ENCODE measurements at regions of chr1 and their contacts with region 1.

Region 1: DNA sequence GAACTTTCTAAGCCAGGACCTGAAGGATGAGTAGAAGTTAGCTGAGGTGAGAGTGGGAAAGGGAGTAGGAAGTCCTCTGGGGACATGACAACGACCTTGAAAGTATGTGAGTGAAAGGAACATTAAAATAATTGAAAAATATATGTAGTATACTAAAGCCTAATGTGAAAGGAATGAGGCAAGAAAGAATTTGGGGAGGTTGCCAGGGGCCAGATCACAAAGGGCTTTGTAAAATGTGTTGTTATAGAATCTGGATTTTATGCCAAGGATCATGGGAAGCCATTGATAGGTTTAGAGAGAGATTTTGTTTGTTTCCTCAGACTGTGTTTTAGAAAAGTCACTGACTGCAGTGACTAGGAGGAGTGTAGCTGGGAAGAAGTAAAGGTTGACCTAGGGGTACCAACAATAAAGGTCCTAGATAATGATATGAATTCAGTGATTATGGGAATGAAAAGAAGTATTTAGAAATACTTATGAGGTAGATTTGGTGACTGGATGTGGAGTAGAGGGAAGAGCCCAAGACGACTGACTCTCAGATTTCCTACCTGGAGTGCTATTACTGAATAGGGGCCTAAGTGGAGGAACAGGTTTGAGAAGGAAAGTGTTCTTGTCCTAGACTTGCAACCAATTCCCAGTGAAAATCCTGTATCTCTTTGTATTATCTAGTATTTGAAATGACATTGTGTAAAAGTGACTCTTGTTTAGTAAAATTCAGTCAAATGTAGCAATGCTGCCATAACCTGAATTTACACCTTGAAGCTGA is 179.8 kb downstream of the PHTF1 start:
- DNase-seq: no peak
- H3K4me3 ChIP-seq: no peak overlapping the region
- H3K27ac ChIP-seq: no peak overlapping the region
- H3K4me1 ChIP-seq: no peaks in the 10 kb centered on the region
- H3K27me3 ChIP-seq: no peaks in the 10 kb centered on the region
- CTCF ChIP-seq: no peak

Region 2: GRCh38 chr1:112304612-112305011 is 1274.8 kb before region 1 on chr1:
- intact Hi-C with region 1: loop called (anchors 5 kb)
- DNase-seq: no peak
- H3K4me3 ChIP-seq: no peak overlapping the region
- H3K27ac ChIP-seq: no peak overlapping the region
- H3K4me1 ChIP-seq: no peaks in the 10 kb centered on the region
- H3K27me3 ChIP-seq: no peaks in the 10 kb centered on the region
- CTCF ChIP-seq: no peak

Region 3: DNA sequence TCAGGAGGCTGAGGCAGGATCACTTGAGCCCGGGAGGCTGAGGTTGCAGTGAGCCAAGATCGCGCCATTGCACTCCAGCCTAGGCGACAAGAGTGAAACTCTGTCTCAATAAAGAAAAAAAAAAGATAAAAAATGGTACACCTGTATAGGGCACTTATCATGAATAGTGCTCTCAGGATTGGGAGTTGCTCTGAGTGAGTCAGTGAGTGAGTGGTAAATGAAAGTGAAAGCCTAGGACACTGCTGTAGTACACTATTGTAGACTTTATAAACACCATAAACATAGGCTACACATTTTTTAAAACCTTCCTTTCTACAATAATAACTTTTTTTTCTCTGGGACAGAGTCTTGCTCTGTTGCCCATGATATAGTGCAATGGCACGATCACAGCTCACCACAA is 163.1 kb after region 1 on chr1:
- intact Hi-C with region 1: no loop called
- DNase-seq: no peak
- H3K4me3 ChIP-seq: no peak overlapping the region
- H3K27ac ChIP-seq: no peak overlapping the region
- H3K4me1 ChIP-seq: no peaks in the 10 kb centered on the region
- H3K27me3 ChIP-seq: no peaks in the 10 kb centered on the region
- CTCF ChIP-seq: no peak